Activated naive CD4-positive, alpha-beta T cell treated with anti-CD3 and anti-CD28 coated beads, Interleukin-2, amount 10 ng/mL, durations not matched to agents 7 days and 5 days (primary cell): ENCODE measurements at regions of chr10 and their contacts with region 1.

Region 1: GRCh38 chr10:24727786-24728185 is 4.1 kb upstream of the ARHGAP21 start:
- DNase-seq: no peak
- H3K4me3 Mint-ChIP-seq: no peak overlapping the region
- H3K27ac Mint-ChIP-seq: no peak overlapping the region
- H3K4me1 Mint-ChIP-seq: peaks cover 6% of the 10 kb centered on the region
- H3K27me3 Mint-ChIP-seq: peaks cover 4% of the 10 kb centered on the region

Region 2: GRCh38 chr10:24716295-24716694 is 11.5 kb before region 1 on chr10:
- CTCF ChIA-PET with region 1: no interaction called
- DNase-seq: no peak
- H3K4me3 Mint-ChIP-seq: no peak overlapping the region
- H3K27ac Mint-ChIP-seq: no peak overlapping the region
- H3K4me1 Mint-ChIP-seq: peaks cover 18% of the 10 kb centered on the region
- H3K27me3 Mint-ChIP-seq: no peaks in the 10 kb centered on the region

Region 3: GRCh38 chr10:24744946-24745345 is 17.2 kb after region 1 on chr10:
- CTCF ChIA-PET with region 1: no interaction called
- DNase-seq: no peak
- H3K4me3 Mint-ChIP-seq: no peak overlapping the region
- H3K27ac Mint-ChIP-seq: no peak overlapping the region
- H3K4me1 Mint-ChIP-seq: peaks cover 2% of the 10 kb centered on the region
- H3K27me3 Mint-ChIP-seq: no peaks in the 10 kb centered on the region

Region 4: GRCh38 chr10:24756283-24756682 is 28.5 kb after region 1 on chr10:
- CTCF ChIA-PET with region 1: no interaction called
- DNase-seq: no peak
- H3K4me3 Mint-ChIP-seq: no peak overlapping the region
- H3K27ac Mint-ChIP-seq: no peak overlapping the region
- H3K4me1 Mint-ChIP-seq: no peaks in the 10 kb centered on the region
- H3K27me3 Mint-ChIP-seq: peaks cover 4% of the 10 kb centered on the region

Region 5: DNA sequence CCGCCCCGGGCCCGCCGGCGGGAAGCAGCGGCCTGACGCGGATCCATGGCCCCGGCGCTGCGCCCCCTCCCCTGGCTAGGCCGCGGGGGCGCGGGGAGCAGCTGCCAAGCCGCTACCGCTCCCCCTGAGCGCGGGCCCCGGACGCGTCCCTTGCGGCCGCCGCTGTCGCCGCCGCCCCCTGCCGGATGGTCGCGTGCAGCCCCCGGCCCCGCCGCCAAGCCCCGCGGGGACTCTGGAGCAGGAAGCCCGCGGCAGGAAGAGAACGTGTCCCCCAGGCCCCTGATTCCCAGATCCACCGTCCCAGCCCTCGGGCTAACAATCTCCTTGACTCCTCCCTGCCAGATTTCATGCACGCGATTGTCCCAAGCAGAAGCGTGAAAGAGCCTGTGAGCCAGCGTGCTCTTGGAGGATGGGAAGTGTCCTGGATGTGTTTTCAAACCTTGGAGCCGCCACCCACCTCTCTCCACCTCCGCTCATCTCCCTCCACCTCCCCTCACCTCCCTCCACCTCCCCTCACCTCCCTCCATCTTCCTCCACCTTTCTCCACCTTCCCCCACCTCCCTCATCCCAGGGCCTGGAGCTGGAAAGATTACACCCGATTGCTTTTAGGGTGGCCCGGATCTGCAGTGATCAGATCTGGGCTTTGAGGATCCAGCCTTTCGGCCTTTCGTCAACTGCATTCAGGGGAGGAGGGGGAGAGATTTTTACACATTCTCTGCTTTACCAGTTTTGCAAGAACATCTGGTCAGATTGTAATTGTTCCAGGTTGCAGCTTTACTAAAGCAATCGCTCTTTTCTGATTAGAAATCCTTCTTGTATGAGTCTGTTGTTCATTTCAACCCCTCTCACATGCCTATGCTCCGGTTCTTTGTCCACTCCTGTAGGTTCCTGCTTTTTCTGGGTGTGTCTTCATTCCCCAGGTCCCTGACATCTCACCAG is 225.2 kb after region 1 on chr10:
- CTCF ChIA-PET with region 1: interaction called, 10 read pairs
- DNase-seq: peak; percentile 63
- H3K4me3 Mint-ChIP-seq: peak overlapping the region; percentile 74
- H3K27ac Mint-ChIP-seq: peak overlapping the region; percentile 73
- H3K4me1 Mint-ChIP-seq: peaks cover 22% of the 10 kb centered on the region
- H3K27me3 Mint-ChIP-seq: no peaks in the 10 kb centered on the region